Caco-2 (cell line): ENCODE measurements at regions of chrX and their contacts with region 1.

Region 1: GRCh38 chrX:56995271-56995994 is at the start of gene SPIN3:
- DNase-seq: peak; percentile 92 to 95
- H3K4me3 ChIP-seq: peak within 1 kb of the TSS; percentile 74
- H3K4me3 Mint-ChIP-seq: peak within 1 kb of the TSS; percentile 92
- H3K27ac Mint-ChIP-seq: peak within 1 kb of the TSS; percentile 85
- H3K4me1 ChIP-seq: no peaks in the 10 kb centered on the region
- H3K4me1 Mint-ChIP-seq: no peaks in the 10 kb centered on the region
- H3K27me3 ChIP-seq: no peaks in the 10 kb centered on the region
- H3K27me3 Mint-ChIP-seq: no peaks in the 10 kb centered on the region
- CTCF ChIP-seq: no peak
- total RNA-seq, gene SPIN3: 17.9 TPM in 2 replicates

Region 2: DNA sequence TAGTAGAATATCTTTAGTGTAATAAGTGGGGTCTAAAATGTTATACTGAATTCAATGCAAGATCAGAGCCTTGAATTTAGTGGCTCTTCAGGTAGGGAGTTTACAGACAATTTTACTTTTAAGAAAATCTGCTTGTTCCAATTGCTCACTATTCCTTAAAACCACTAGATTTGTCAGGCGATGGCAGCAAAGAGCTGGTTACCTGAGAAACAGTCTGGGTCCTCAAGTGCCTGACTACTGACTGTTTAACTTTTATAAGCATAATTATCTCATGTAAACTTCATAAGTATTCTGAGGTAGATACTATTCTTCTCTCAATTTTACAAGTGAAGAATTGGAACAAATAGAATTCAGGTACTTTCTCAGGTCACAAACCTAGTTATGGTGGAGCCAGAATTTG is 1193.6 kb before region 1 on chrX:
- CTCF ChIA-PET with region 1: no interaction called
- POLR2A ChIA-PET with region 1: no interaction called
- intact Hi-C with region 1: no loop called
- DNase-seq: no peak
- H3K4me3 ChIP-seq: no peak overlapping the region
- H3K4me3 Mint-ChIP-seq: no peak overlapping the region
- H3K27ac Mint-ChIP-seq: no peak overlapping the region
- H3K4me1 ChIP-seq: no peaks in the 10 kb centered on the region
- H3K4me1 Mint-ChIP-seq: no peaks in the 10 kb centered on the region
- H3K27me3 ChIP-seq: no peaks in the 10 kb centered on the region
- H3K27me3 Mint-ChIP-seq: no peaks in the 10 kb centered on the region
- CTCF ChIP-seq: peak; percentile 6 to 18

Region 3: DNA sequence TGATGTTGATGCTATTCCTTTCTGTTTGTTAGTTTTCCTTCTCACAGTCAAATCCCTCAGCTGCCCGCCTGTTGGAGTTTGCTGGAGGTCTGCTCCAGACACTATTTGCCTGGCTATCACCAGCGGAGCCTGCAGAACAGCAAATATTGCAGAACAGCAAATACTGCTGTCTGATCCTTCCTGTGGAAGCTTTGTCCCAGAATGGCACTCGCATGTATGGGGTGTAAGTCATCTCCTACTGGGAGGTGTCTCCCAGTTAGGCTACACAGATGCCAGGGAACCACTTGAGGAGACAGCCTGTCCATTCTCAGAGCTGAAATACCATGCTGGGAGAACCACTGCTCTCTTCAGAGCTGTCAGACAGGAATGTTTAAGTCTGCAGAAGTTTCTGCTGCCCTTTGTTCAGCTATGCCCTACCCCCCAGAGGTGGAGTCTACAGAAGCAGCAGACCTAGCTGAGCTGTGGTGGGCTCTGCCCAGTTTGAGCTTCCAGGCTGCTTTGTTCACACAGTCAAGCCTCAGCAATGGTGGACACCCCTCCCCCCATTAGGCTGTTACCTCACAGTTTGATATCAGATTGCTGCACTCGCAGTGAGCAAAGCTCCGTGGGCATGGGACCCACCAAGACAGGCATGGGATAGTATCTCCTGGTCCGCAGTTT is 75.0 kb before region 1 on chrX:
- CTCF ChIA-PET with region 1: no interaction called
- POLR2A ChIA-PET with region 1: no interaction called
- intact Hi-C with region 1: no loop called
- DNase-seq: peak in 1 of 2 experiments; percentile 12
- H3K4me3 ChIP-seq: no peak overlapping the region
- H3K4me3 Mint-ChIP-seq: no peak overlapping the region
- H3K27ac Mint-ChIP-seq: no peak overlapping the region
- H3K4me1 ChIP-seq: no peaks in the 10 kb centered on the region
- H3K4me1 Mint-ChIP-seq: peaks cover 8% of the 10 kb centered on the region
- H3K27me3 ChIP-seq: no peaks in the 10 kb centered on the region
- H3K27me3 Mint-ChIP-seq: no peaks in the 10 kb centered on the region
- CTCF ChIP-seq: no peak

Region 4: DNA sequence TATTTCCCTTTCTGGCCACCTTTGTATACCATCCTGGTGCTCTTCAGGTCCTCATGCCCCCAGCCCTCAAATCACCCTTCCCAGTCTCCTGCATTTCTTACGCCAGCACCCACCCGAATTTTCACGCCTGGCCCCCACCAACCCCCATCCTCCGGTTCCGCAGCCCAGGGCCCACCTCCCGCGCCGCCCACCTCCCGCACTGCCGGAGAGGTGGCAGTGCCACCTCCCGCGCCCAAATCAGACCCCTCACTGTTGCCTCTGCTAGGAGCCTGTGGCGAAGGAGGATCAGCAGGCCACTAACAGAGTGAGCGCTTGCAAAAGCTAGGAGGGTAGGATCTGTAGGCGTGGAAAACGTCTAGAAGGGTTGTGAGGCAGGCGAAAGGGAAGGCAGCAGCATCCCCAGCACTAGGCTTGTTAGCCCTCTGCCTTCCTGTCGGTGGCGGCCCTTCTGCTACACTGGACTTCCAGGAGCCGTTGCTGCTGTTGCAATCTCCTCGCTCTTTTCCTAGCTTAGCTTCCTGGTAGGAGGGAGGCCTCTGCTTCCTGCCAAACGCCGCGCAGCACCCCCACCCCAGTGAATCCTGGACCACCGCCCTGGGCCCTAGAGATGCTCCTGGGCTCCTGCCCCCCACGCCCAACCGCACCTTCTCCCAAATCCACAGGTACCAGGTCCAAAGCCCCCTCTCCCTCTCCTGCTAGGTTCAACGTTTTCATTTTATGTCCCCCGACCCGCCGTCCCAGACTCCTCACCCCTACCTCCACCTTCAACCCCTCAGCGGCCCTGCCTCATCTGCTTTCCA is 75.0 kb after region 1 on chrX:
- CTCF ChIA-PET with region 1: no interaction called
- POLR2A ChIA-PET with region 1: no interaction called
- intact Hi-C with region 1: loop called (anchors 5 kb)
- DNase-seq: no peak
- H3K4me3 ChIP-seq: no peak overlapping the region
- H3K4me3 Mint-ChIP-seq: no peak overlapping the region
- H3K27ac Mint-ChIP-seq: no peak overlapping the region
- H3K4me1 ChIP-seq: peaks cover 4% of the 10 kb centered on the region; the same call in 1 of the 2 replicates
- H3K4me1 Mint-ChIP-seq: peaks cover 9% of the 10 kb centered on the region
- H3K27me3 ChIP-seq: no peaks in the 10 kb centered on the region
- H3K27me3 Mint-ChIP-seq: no peaks in the 10 kb centered on the region
- CTCF ChIP-seq: no peak

Region 5: GRCh38 chrX:57121162-57121741 is 125.8 kb after region 1 on chrX and contains the start of gene SPIN2B:
- CTCF ChIA-PET with region 1: no interaction called
- POLR2A ChIA-PET with region 1: interaction called, 6 read pairs
- intact Hi-C with region 1: loop called (anchors 2 kb)
- DNase-seq: peak; percentile 85 to 90
- H3K4me3 ChIP-seq: peak within 1 kb of the TSS; percentile 84
- H3K4me3 Mint-ChIP-seq: peak within 1 kb of the TSS; percentile 97
- H3K27ac Mint-ChIP-seq: peak within 1 kb of the TSS; percentile 95
- H3K4me1 ChIP-seq: no peaks in the 10 kb centered on the region
- H3K4me1 Mint-ChIP-seq: peaks cover 8% of the 10 kb centered on the region
- H3K27me3 ChIP-seq: no peaks in the 10 kb centered on the region
- H3K27me3 Mint-ChIP-seq: no peaks in the 10 kb centered on the region
- CTCF ChIP-seq: peak in 1 of 2 experiments; percentile 11
- total RNA-seq, gene SPIN2B: 14.2 and 14.3 TPM in 2 replicates